Dorsolateral prefrontal cortex (tissue), 120 donors: ENCODE measurements at regions of chr18 and their contacts with region 1.

Region 1: GRCh38 chr18:62584241-62585120 is 61.7 kb downstream of the ZCCHC2 start:
- DNase-seq: peak; percentile 80 to 93 (median 86)
- H3K4me3 ChIP-seq: peak overlapping the region in 23 of 59 donors; percentile 7 to 48 (median 27)
- H3K27ac ChIP-seq: peak overlapping the region in 56 of 59 donors; percentile 7 to 84 (median 68)
- H3K27me3 ChIP-seq: no peaks in the 10 kb centered on the region
- CTCF ChIP-seq: peak; percentile 86 to 100 (median 98)

Region 2: DNA sequence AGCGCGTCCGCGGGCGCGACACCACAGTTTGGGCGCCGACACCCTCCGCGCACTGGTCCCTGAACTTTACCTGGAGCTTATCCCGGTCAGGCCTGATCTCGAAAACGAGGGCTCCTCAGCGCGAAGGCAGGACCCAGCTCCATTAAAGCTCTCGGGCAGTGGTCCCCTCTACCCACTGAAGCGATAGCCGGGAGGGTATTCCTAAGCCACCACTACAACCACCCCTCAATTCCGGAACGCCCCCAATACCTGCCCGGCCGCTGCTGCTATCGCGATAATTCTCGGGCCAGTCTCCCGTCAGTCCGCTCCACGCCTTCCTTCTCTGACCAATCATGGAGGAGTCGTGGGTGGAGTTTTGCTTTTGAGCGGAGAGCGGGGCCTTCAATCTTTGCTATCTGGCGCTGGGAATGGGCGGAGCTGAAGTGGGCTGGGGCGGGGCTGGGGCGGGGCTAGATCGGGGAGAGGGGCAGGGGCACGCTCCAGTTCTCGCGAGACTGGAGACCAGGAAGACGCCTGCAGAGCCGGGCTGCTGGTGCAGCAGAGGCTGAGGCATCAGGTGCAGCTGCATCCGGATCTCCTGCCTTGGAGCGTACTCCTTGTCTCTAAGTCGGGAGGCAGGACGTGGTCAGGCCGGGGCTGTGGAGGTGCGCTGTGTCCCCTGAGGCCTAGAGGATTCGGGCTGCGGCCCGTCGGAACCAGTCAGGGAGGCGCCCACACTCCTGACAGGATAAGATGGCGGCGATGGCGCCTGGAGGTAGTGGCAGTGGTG is 397.5 kb before region 1 on chr18 and contains the starts of genes PIGN and RELCH:
- intact Hi-C with region 1: loop called (anchors 2 kb)
- DNase-seq: peak; percentile 82 to 98 (median 96)
- H3K4me3 ChIP-seq: peak within 1 kb of the TSS; percentile 67 to 100 (median 95)
- H3K27ac ChIP-seq: peak within 1 kb of the TSS in 58 of 59 donors; percentile 10 to 94 (median 84)
- H3K27me3 ChIP-seq: no peaks in the 10 kb centered on the region
- CTCF ChIP-seq: peak in 15 of 56 donors; percentile 4 to 33 (median 13)
- total RNA-seq, gene PIGN: 21.1 to 43.5 (median 31.0) TPM
- total RNA-seq, gene RELCH: 44.0 to 88.4 (median 63.7) TPM

Region 3: GRCh38 chr18:62522504-62523254 is 61.8 kb before region 1 on chr18 and contains the start of gene ZCCHC2:
- intact Hi-C with region 1: loop called (anchors 5 to 10 kb)
- DNase-seq: peak; percentile 96 to 100 (median 98)
- H3K4me3 ChIP-seq: peak within 1 kb of the TSS; percentile 70 to 98 (median 94)
- H3K27ac ChIP-seq: peak within 1 kb of the TSS; percentile 91 to 100 (median 98)
- H3K27me3 ChIP-seq: no peaks in the 10 kb centered on the region
- CTCF ChIP-seq: peak in 24 of 56 donors; percentile 0 to 53 (median 22)
- total RNA-seq, gene ZCCHC2: 26.3 to 65.9 (median 38.4) TPM

Region 4: DNA sequence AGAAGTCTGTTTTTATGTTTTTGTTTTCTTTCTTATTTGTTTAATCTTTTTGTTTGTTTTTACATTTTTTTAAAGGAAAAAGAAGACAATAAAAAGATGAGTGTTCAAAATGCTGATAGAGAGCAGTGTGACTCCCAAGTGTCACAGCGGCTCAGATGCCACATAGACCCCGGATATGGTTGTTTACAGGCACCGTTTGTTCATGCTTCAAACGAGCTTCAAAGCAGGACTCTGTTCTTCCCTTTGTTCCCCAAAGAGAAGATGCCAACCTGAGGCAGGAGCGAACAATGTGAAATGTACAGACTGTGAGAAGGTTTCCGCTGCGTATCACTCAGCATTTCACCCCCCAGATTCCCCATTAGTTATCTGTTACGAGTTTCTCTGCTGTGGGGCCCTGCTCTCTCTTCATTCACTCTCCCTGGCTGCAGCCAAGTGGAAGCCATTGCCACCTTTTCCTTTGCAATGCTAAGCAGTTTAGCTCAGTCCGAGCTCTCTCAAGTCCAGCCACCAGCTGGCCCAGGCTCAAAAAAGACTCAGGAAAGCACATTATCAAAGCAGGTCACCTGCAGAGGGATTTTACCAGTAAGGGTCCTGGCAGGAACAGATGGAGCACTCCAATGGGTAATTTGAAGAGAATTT is 94.5 kb after region 1 on chr18:
- intact Hi-C with region 1: no loop called
- DNase-seq: no peak
- H3K4me3 ChIP-seq: no peak overlapping the region
- H3K27ac ChIP-seq: no peak overlapping the region
- H3K27me3 ChIP-seq: no peaks in the 10 kb centered on the region
- CTCF ChIP-seq: no peak

Region 5: GRCh38 chr18:62802523-62802922 is 218.0 kb after region 1 on chr18:
- intact Hi-C with region 1: loop called in 1 of 2 experiments (anchors 5 kb)
- DNase-seq: no peak
- H3K4me3 ChIP-seq: no peak overlapping the region
- H3K27ac ChIP-seq: peak overlapping the region in 31 of 59 donors; percentile 1 to 74 (median 38)
- H3K27me3 ChIP-seq: no peaks in the 10 kb centered on the region
- CTCF ChIP-seq: peak in 35 of 56 donors; percentile 4 to 59 (median 33)

Region 6: DNA sequence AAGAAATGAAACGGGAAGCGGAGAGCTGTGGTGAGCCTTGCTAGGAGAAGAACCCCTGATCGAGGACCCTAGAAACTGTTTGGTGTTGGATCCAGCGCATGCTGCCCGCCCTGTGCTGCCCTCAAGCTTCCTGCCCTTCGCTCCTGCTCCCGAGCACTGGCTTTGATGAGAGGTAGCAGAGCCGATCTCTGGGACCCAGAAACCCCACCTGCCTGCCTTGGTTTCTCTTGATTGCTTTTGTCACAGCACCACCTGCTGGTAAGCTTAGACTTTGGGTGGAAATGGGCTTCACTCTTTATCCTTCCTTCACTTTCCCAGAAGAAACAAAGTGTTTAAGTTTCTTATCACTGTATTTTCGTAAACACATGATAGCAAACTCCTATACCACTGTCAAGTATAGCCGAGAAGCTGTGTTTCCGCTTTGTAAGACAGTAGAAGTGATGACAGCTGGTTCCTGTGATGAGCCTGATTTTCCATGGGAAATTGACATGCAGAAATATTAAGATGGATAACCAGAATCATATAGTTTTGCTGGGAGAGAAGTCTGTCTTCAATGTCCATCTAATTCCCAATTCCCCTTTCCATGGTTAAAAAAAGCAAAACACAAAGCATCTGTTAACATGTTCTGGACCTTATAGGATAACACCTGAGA is 398.2 kb after region 1 on chr18:
- intact Hi-C with region 1: loop called (anchors 2 kb)
- DNase-seq: peak in 9 of 10 donors; percentile 63 to 83 (median 69)
- H3K4me3 ChIP-seq: peak overlapping the region in 47 of 59 donors; percentile 3 to 56 (median 37)
- H3K27ac ChIP-seq: peak overlapping the region; percentile 13 to 99 (median 93)
- H3K27me3 ChIP-seq: no peaks in the 10 kb centered on the region
- CTCF ChIP-seq: peak; percentile 68 to 96 (median 88)